ENCODE measurements at regions of chr16 and their contacts with region 1.

Region 1: GRCh38 chr16:78794581-78795250 is 695.3 kb downstream of the WWOX start:
- DNase-seq: peak; percentile 58
- H3K4me3 Mint-ChIP-seq: no peak overlapping the region
- H3K27ac Mint-ChIP-seq: peak overlapping the region; percentile 87
- H3K4me1 Mint-ChIP-seq: peaks cover 55% of the 10 kb centered on the region
- H3K27me3 Mint-ChIP-seq: no peaks in the 10 kb centered on the region

Region 2: DNA sequence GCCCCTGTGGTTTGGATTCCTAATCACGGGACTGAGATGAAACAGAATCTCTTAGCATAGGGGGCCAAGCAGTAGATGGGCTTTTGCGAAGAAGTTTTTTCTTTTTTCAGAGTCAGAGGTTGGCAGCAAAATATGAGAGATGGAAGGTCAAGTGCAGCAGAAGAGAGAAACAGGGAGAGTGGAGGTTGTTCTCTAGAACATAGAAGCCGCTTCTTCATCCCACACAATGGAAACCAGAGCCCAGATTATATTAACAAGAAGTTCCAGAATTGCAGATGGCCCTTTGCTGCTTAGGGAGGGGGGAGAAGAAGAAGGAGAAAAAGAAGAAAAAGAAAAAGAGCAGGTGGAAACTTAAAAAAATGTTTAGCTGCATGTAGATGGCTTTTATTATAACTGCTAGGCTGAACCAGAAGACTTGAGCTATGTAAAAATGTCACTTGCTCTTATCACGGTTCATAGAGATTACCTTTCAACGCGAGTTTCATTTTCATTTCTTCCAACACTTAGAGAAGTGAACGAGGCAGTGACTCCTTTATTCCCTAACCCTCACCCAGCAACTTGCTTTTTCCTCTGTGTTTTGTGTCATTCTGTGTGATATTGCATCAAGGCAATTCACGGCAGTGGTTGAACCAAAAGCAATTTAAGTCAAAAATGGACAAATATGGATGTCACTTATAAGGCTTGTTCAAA is 42.2 kb after region 1 on chr16:
- CTCF ChIA-PET with region 1: no interaction called
- POLR2A ChIA-PET with region 1: interaction called, 3 read pairs
- intact Hi-C with region 1: loop called (anchors 1 kb)
- DNase-seq: peak; percentile 31
- H3K4me3 Mint-ChIP-seq: peak overlapping the region; percentile 51
- H3K27ac Mint-ChIP-seq: peak overlapping the region; percentile 93
- H3K4me1 Mint-ChIP-seq: peaks cover 37% of the 10 kb centered on the region
- H3K27me3 Mint-ChIP-seq: no peaks in the 10 kb centered on the region

Region 3: DNA sequence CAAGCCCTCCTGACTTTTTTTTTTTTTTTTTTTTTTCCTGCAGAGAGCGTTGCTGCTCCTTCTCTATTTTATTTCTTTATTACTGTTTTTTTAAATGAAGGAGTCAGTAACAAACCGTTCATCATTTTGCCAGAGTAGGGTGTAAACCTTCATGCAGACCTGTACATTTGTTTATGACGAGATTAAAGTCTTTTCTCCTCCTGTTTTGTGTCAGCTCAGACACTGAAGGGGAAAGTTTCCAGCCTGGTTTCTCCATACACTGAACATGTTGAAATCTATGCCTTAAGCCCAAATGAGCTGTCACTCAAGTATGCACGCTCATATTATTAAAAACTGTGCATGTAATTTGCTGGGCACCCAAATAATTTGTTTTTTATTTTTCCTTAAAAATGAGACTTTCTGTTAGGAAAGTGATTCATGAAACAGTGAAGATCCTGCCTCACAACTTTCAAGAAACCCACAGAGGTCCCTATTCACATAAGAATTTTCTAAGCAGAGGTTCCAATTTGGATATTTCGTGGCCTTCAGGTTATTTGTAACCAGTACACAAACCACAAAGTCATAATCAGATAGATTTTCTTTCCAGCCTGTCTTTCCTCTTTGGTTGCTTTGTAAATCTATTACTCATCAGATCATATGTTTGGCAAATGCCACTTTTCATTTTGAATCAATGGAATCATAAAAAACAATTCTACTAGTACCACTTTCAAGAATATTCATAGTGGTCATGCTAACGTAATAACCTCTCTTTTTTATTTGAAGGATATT is 105.5 kb after region 1 on chr16:
- CTCF ChIA-PET with region 1: interaction called, 3 read pairs
- POLR2A ChIA-PET with region 1: interaction called, 4 read pairs
- intact Hi-C with region 1: loop called (anchors 1 kb)
- DNase-seq: no peak
- H3K4me3 Mint-ChIP-seq: peak overlapping the region; percentile 20
- H3K27ac Mint-ChIP-seq: peak overlapping the region; percentile 96
- H3K4me1 Mint-ChIP-seq: peaks cover 76% of the 10 kb centered on the region
- H3K27me3 Mint-ChIP-seq: no peaks in the 10 kb centered on the region